ENCODE measurements at regions of chr2 and their contacts with region 1.

Region 1: GRCh38 chr2:65056215-65057053 is at the start of gene CEP68:
- DNase-seq: peak; percentile 97
- H3K4me3 Mint-ChIP-seq: peak within 1 kb of the TSS; percentile 90
- H3K27ac Mint-ChIP-seq: peak within 1 kb of the TSS; percentile 41
- H3K4me1 Mint-ChIP-seq: peaks cover 10% of the 10 kb centered on the region
- H3K27me3 Mint-ChIP-seq: no peaks in the 10 kb centered on the region
- CTCF ChIP-seq: no peak
- total RNA-seq, gene CEP68: 5.4 and 7.2 TPM in 2 replicates

Region 2: DNA sequence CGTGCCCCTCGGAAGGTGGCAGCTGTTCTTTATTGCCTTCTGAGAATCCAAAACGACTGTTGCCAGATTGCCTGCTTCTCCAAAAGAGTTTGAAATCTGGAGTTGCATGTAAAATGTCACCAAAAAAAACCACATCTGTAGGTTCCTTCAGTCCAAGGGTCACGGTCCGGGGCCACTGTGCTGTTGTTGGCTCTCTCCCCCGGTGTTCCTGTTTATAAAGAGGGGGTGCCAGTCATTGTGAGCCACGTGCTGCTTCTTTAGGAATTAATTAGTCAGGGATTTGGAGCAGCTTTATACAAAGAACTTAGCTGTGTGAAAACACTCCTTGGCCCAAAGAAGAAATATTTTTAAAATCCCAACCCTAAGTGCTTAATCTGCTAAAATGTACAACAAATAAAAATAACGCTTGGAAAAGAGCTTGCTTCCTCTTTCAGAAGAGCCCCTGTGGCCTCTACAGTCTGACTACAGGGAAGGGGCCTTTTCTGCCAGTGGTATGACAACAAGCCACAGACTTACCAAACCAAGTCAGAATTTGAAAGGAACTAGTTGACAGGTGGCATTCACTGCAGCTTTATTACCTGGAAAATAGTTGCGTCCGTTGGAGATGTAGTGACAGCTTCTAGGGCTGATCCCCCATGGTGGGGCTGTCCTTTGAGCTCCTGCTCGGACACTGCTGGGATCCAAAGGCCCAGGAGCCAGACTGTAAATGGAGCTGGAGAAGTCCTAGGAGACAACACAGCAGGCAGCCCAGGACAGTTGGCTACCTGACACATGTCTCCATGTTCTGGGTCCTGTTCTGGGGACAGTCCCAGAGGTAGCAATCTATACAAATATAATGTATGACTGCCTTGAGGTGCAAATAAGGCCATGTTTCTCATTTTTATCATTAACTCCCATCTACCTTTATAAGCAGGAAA is 151.8 kb before region 1 on chr2:
- CTCF ChIA-PET with region 1: no interaction called
- POLR2A ChIA-PET with region 1: interaction called, 12 read pairs
- intact Hi-C with region 1: no loop called
- DNase-seq: no peak
- H3K4me3 Mint-ChIP-seq: no peak overlapping the region
- H3K27ac Mint-ChIP-seq: no peak overlapping the region
- H3K4me1 Mint-ChIP-seq: peaks cover 11% of the 10 kb centered on the region
- H3K27me3 Mint-ChIP-seq: no peaks in the 10 kb centered on the region
- CTCF ChIP-seq: no peak

Region 3: DNA sequence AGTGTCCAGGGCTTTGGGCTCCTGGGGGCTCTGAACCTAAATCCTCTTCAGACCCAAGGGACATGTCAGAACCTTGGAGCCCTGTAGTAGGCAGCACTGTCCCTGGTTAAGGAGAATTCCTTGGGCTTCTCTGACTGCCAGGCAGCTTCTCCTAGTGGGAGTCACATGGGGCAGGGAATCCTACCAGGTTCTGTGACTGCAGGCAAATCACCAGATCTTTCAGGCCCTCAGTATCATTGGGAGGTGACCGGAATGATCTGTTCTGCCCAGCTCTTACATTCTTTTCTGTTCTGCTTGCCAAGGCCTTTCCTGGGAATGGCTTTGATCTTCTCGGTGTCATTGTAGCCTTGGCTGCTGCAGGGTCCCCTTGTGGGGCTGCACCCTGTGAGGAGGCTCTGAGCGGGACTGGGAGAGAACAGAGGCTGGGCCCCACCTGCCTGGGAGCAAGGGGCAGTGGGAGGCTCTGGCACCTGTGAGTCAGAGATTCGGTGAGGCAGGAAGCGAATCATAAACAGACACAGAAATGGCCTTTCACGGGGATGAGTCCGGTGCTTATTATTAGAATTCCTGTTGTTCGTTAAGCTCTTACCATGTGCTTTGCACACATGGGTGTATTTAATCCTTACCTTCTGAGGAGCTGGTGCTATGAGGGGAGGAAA is 13.9 kb after region 1 on chr2:
- CTCF ChIA-PET with region 1: interaction called, 7 read pairs
- POLR2A ChIA-PET with region 1: interaction called, 72 read pairs
- intact Hi-C with region 1: no loop called
- DNase-seq: peak; percentile 51
- H3K4me3 Mint-ChIP-seq: no peak overlapping the region
- H3K27ac Mint-ChIP-seq: peak overlapping the region; percentile 78
- H3K4me1 Mint-ChIP-seq: peaks cover 24% of the 10 kb centered on the region
- H3K27me3 Mint-ChIP-seq: no peaks in the 10 kb centered on the region
- CTCF ChIP-seq: no peak

Region 4: DNA sequence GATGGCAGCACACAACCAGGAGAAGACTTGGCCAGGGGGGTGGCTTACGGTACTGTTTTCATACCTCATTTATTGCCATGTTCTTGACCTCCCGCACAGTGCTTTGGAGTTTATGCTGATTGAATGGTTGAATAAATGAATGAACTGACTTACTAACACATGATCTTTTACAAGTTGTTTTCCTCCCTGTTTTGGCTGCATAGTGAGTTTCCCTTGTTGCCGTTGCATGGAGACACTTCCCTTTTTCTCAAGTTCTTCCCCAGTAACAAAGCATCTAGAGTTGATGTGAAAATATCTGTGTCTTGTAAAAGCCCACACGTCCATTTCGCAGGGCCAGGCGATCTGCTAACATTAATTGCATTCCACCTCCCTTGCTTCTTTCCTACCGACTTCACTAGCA is 109.1 kb after region 1 on chr2:
- CTCF ChIA-PET with region 1: interaction called, 3 read pairs
- POLR2A ChIA-PET with region 1: no interaction called
- intact Hi-C with region 1: loop called (anchors 5 kb)
- DNase-seq: no peak
- H3K4me3 Mint-ChIP-seq: no peak overlapping the region
- H3K27ac Mint-ChIP-seq: no peak overlapping the region
- H3K4me1 Mint-ChIP-seq: no peaks in the 10 kb centered on the region
- H3K27me3 Mint-ChIP-seq: no peaks in the 10 kb centered on the region
- CTCF ChIP-seq: no peak

Region 5: GRCh38 chr2:65186872-65187851 is 130.7 kb after region 1 on chr2:
- CTCF ChIA-PET with region 1: interaction called, 47 read pairs
- POLR2A ChIA-PET with region 1: interaction called, 4 read pairs
- intact Hi-C with region 1: loop called (anchors 2 kb)
- DNase-seq: peak; percentile 83
- H3K4me3 Mint-ChIP-seq: no peak overlapping the region
- H3K27ac Mint-ChIP-seq: no peak overlapping the region
- H3K4me1 Mint-ChIP-seq: peaks cover 5% of the 10 kb centered on the region
- H3K27me3 Mint-ChIP-seq: no peaks in the 10 kb centered on the region
- CTCF ChIP-seq: peak; percentile 67

Region 6: GRCh38 chr2:65220432-65221131 is 164.1 kb after region 1 on chr2:
- CTCF ChIA-PET with region 1: no interaction called
- POLR2A ChIA-PET with region 1: no interaction called
- intact Hi-C with region 1: no loop called
- DNase-seq: no peak
- H3K4me3 Mint-ChIP-seq: no peak overlapping the region
- H3K27ac Mint-ChIP-seq: no peak overlapping the region
- H3K4me1 Mint-ChIP-seq: peaks cover 7% of the 10 kb centered on the region
- H3K27me3 Mint-ChIP-seq: no peaks in the 10 kb centered on the region
- CTCF ChIP-seq: no peak